IMR-90 (cell line): ENCODE measurements at regions of chr9 and their contacts with region 1.

Region 1: DNA sequence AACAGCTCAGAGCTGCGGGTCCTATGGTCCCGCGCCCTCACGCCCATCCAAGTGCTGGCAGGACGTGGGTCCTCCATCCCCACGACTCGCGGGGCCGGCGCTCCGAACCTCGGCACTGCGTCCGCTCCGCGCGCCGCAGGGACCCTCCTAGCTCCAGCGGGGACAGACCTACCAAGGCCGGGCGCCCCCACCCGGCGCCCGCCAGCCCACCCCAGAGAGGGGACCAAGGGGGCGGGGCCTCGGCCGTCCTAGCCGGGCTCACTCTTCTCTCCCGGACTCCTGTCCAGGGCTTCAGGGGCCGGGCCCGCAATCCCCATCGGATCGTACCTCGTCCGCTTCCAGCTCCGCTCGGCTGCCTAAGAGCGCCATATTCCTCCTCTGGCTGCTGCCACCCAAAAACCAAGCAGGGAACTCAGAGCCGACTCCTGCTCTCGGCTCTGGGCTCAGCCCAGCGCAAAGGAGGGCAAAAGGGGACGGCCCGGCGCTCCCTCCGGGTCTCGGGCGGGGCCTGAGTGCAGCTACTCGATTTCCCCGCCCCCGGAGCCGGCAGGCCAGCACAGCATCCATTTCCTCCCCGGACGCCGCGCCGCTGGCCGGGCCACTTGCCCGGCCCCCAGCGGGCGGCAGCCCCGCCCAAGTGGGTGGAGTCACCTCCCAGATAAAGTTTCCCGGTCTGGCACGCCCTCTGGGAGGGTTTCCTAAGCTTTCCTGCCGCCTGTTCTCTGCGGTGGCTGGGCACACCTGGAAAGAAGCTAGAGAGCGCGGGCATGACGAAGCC is at the start of gene TTC39B:
- DNase-seq: peak; percentile 87
- ATAC-seq: peak; percentile 94
- H3K4me3 ChIP-seq: peak within 1 kb of the TSS; percentile 95
- H3K27ac ChIP-seq: peak within 1 kb of the TSS; percentile 96
- H3K4me1 ChIP-seq: peaks cover 5% of the 10 kb centered on the region
- H3K27me3 ChIP-seq: no peaks in the 10 kb centered on the region
- CTCF ChIP-seq: 0 out of 2 replicates have a peak, but pooled peaks have one; percentile 16
- POLR2A ChIP-seq: peak; percentile 57; the same call in 1 of the 2 replicates
- RAD21 ChIP-seq: no peak
- total RNA-seq, gene TTC39B: 9.7 and 12.2 TPM in 2 replicates

Region 2: GRCh38 chr9:15200111-15200510 is 106.8 kb before region 1 on chr9:
- CTCF ChIA-PET with region 1: no interaction called
- POLR2A ChIA-PET with region 1: no interaction called
- dilution Hi-C with region 1: no loop called
- in situ Hi-C with region 1: no loop called
- intact Hi-C with region 1: no loop called
- DNase-seq: no peak
- ATAC-seq: no peak
- H3K4me3 ChIP-seq: no peak overlapping the region
- H3K27ac ChIP-seq: no peak overlapping the region
- H3K4me1 ChIP-seq: no peaks in the 10 kb centered on the region
- H3K27me3 ChIP-seq: no peaks in the 10 kb centered on the region
- CTCF ChIP-seq: no peak
- POLR2A ChIP-seq: no peak
- RAD21 ChIP-seq: no peak

Region 3: GRCh38 chr9:15211160-15211814 is 95.7 kb before region 1 on chr9:
- CTCF ChIA-PET with region 1: no interaction called
- POLR2A ChIA-PET with region 1: no interaction called
- dilution Hi-C with region 1: no loop called
- in situ Hi-C with region 1: no loop called
- intact Hi-C with region 1: loop called (anchors 1 kb)
- DNase-seq: peak; percentile 79
- ATAC-seq: peak; percentile 78
- H3K4me3 ChIP-seq: no peak overlapping the region
- H3K27ac ChIP-seq: no peak overlapping the region; the same call in 1 of the 2 replicates
- H3K4me1 ChIP-seq: peaks cover 2% of the 10 kb centered on the region
- H3K27me3 ChIP-seq: no peaks in the 10 kb centered on the region
- CTCF ChIP-seq: peak; percentile 87
- POLR2A ChIP-seq: no peak; the same call in 1 of the 2 replicates
- RAD21 ChIP-seq: peak; percentile 88

Region 4: DNA sequence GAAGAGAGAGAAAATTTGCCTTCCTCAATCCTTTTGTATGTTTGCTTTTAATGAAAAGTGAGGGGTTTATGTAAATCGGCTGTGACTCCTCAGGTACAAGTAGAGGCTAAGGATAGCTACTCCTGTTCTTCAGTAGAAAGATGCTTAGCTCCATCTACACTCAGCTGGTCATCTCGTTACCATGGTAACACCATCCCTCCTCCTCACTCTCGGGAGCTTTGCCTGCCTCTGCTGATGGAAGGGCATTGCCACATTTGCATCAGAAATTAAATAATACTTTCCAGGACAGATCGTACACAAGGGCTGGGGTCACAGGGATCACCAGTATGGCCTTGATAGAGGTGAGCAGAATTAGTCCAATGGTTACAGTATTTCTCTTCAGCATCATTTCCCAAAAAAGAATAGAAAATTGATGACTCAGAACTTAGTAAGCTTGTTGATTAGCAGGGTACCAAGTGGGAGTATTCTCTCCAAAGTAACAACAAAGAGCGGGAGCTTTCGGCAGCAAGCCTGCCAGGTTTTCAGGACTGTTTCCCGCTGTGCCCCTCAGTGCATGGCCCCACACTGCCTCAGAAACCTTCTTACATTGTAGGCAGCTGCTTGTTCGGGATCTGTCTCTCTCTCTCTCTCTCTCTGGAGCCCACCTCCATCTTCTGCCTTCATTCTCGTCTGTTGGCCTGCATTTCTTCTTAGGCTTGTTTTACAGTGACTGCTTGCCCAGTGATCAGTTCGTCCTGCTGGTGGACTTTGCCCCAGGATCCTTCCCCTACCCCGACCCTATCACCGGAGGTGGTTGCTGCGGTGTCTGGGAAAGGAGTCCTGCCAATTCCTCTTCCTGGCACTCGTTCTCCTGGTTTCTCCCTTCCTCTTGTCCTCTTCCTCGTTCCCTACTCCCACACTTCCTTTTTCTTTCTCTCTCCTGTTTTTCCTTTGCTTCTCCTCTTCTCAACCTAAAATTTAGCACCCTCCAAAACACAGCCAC is 63.8 kb after region 1 on chr9:
- CTCF ChIA-PET with region 1: interaction called, 3 read pairs
- POLR2A ChIA-PET with region 1: no interaction called
- dilution Hi-C with region 1: no loop called
- in situ Hi-C with region 1: no loop called
- intact Hi-C with region 1: loop called (anchors 1 kb)
- DNase-seq: no peak
- ATAC-seq: no peak
- H3K4me3 ChIP-seq: no peak overlapping the region
- H3K27ac ChIP-seq: peak overlapping the region; percentile 7; the same call in 1 of the 2 replicates
- H3K4me1 ChIP-seq: peaks cover 13% of the 10 kb centered on the region
- H3K27me3 ChIP-seq: no peaks in the 10 kb centered on the region
- CTCF ChIP-seq: no peak
- POLR2A ChIP-seq: no peak
- RAD21 ChIP-seq: no peak

Region 5: GRCh38 chr9:15403155-15403554 is 96.2 kb after region 1 on chr9:
- CTCF ChIA-PET with region 1: no interaction called
- POLR2A ChIA-PET with region 1: no interaction called
- dilution Hi-C with region 1: no loop called
- in situ Hi-C with region 1: no loop called
- intact Hi-C with region 1: loop called (anchors 5 kb)
- DNase-seq: no peak
- ATAC-seq: no peak
- H3K4me3 ChIP-seq: no peak overlapping the region
- H3K27ac ChIP-seq: no peak overlapping the region
- H3K4me1 ChIP-seq: peaks cover 12% of the 10 kb centered on the region
- H3K27me3 ChIP-seq: no peaks in the 10 kb centered on the region
- CTCF ChIP-seq: no peak
- POLR2A ChIP-seq: no peak
- RAD21 ChIP-seq: no peak

Region 6: DNA sequence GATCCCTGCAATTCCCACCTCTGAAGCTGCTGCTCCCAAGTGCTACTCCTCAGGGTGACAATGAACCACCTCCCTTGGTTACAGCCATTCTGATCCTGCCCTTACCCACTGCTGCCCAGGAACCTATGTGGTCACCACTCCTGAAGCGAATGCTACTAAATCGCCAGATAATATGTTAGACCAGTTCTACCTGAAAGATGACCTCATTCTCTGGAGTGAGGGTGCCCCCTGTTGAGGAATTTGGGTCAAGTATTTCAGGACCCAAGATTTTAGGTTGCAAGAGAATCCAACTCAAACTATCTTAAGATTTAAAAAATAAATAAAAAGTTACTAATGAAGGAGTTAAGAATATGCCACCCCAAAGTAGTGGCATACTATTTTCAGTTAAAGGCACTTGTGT is 109.9 kb after region 1 on chr9:
- CTCF ChIA-PET with region 1: no interaction called
- POLR2A ChIA-PET with region 1: no interaction called
- dilution Hi-C with region 1: no loop called
- in situ Hi-C with region 1: loop called (anchors 10 kb)
- intact Hi-C with region 1: loop called (anchors 1 kb)
- DNase-seq: peak; percentile 65
- ATAC-seq: peak; percentile 91
- H3K4me3 ChIP-seq: no peak overlapping the region
- H3K27ac ChIP-seq: no peak overlapping the region
- H3K4me1 ChIP-seq: no peaks in the 10 kb centered on the region
- H3K27me3 ChIP-seq: no peaks in the 10 kb centered on the region
- CTCF ChIP-seq: peak; percentile 77
- POLR2A ChIP-seq: no peak
- RAD21 ChIP-seq: peak; percentile 79

Region 7: DNA sequence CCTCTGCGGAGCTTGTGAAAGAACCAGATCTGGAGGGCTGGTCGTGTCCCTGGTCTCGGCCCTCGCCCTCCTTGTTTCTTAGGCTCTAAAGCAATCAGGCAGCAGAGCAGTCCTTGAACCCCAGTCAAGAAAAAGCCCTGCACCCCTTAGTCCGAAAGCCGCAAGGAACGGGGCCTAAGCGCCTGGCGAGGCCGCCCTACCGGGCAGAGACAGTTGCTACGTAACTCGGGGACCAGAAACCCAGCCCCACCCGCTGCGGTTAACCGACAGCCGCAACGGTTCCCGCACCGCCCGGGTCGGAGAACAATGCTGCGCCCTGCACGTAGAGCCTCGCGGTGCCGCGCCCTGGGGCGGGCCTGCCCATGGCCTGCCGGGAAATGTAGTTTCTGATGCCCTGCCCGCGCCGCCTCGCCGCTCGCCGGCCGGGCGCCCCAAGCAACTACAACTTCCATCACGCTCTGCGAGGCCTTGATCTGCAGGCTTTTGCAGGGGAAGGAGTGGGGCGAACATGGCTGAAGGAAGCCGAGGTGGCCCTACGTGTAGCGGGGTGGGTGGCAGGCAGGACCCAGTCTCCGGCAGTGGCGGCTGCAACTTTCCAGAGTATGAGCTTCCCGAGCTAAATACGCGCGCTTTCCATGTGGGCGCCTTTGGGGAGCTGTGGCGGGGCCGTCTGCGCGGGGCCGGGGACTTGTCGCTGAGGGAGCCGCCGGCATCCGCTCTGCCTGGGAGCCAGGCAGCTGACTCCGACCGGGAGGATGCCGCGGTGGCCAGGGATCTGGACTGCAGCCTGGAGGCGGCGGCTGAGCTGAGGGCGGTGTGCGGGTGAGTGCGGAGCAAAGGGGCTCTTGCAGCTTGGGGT is 115.7 kb after region 1 on chr9 and contains the start of gene SNAPC3:
- CTCF ChIA-PET with region 1: no interaction called
- POLR2A ChIA-PET with region 1: no interaction called
- dilution Hi-C with region 1: no loop called
- in situ Hi-C with region 1: loop called (anchors 10 kb)
- intact Hi-C with region 1: loop called (anchors 1 kb)
- DNase-seq: peak; percentile 93
- ATAC-seq: peak; percentile 98
- H3K4me3 ChIP-seq: peak within 1 kb of the TSS; percentile 80
- H3K27ac ChIP-seq: peak within 1 kb of the TSS; percentile 93
- H3K4me1 ChIP-seq: peaks cover 3% of the 10 kb centered on the region
- H3K27me3 ChIP-seq: no peaks in the 10 kb centered on the region
- CTCF ChIP-seq: 0 out of 2 replicates have a peak, but pooled peaks have one; percentile 1
- POLR2A ChIP-seq: no peak; the same call in 1 of the 2 replicates
- RAD21 ChIP-seq: no peak
- total RNA-seq, gene SNAPC3: 31.0 and 40.0 TPM in 2 replicates

Region 8: GRCh38 chr9:15889555-15889954 is 582.6 kb after region 1 on chr9:
- CTCF ChIA-PET with region 1: no interaction called
- POLR2A ChIA-PET with region 1: no interaction called
- dilution Hi-C with region 1: no loop called
- in situ Hi-C with region 1: no loop called
- intact Hi-C with region 1: no loop called
- DNase-seq: peak; percentile 57
- ATAC-seq: peak; percentile 82
- H3K4me3 ChIP-seq: no peak overlapping the region
- H3K27ac ChIP-seq: no peak overlapping the region
- H3K4me1 ChIP-seq: no peaks in the 10 kb centered on the region
- H3K27me3 ChIP-seq: no peaks in the 10 kb centered on the region
- CTCF ChIP-seq: no peak
- POLR2A ChIP-seq: no peak
- RAD21 ChIP-seq: no peak